Activated CD8-positive, alpha-beta T cell treated with anti-CD3 and anti-CD28 coated beads for 36 hours (primary cell): ENCODE measurements at regions of chr3 and their contacts with region 1.

Region 1: GRCh38 chr3:196073188-196073838 is 8.6 kb downstream of the TFRC start:
- DNase-seq: peak; percentile 75
- ATAC-seq: peak; percentile 91
- H3K4me3 Mint-ChIP-seq: no peak overlapping the region
- H3K27ac Mint-ChIP-seq: peak overlapping the region; percentile 68
- H3K4me1 Mint-ChIP-seq: peaks cover 29% of the 10 kb centered on the region
- H3K27me3 Mint-ChIP-seq: no peaks in the 10 kb centered on the region
- CTCF ChIP-seq: peak; percentile 63

Region 2: DNA sequence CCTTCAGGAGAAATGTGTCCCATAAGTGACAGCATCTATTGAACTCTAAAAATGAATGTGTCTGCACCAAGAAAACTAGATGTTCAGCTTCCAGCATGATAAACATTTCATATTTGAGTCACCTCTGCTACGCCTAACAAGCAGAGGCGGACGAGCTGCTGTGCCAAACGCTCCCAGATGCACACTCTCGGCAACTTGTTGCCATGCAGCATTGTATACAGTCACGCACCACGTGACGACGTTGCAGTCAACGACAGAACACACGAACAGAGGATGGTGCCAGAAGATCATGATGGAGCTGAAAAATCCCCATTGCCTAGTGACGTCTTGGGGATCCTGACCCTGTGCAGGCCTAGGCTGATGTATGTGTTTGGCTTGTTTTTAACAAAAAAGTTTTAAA is 939.9 kb before region 1 on chr3:
- CTCF ChIA-PET with region 1: no interaction called
- POLR2A ChIA-PET with region 1: no interaction called
- intact Hi-C with region 1: no loop called
- DNase-seq: peak; percentile 37
- ATAC-seq: no peak
- H3K4me3 Mint-ChIP-seq: no peak overlapping the region
- H3K27ac Mint-ChIP-seq: no peak overlapping the region
- H3K4me1 Mint-ChIP-seq: peaks cover 23% of the 10 kb centered on the region
- H3K27me3 Mint-ChIP-seq: no peaks in the 10 kb centered on the region
- CTCF ChIP-seq: no peak

Region 3: DNA sequence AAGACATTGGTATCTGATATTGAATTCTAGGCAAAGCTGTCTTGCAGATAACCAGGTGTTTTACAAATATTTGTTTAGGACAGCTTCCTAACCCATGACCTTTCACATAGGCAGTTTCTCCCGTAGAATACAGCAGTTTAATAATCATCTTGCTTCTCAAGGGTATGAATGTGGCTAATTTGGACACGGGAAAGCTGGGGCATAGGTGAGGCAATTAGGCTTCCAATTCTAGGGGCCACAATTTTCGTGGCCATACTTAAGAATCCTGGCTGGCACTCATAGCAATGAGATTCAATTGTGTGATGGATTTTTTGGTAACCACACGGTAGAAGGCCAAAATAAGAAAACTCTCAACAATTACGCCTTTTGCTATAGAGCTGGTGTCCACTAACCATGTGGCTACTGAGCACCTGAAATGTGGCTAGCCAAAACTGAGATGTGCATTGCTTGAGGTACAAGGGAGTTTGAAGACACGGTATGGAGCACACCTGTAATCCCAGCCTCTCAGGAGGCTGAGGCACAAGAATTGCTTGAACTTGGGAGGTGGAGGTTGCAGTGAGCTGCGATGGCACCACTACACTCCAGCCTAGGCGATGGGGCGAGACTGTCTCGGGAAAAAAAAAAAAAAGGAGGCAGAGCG is 25.8 kb before region 1 on chr3:
- CTCF ChIA-PET with region 1: interaction called, 31 read pairs
- POLR2A ChIA-PET with region 1: interaction called, 7 read pairs
- intact Hi-C with region 1: no loop called
- DNase-seq: no peak
- ATAC-seq: no peak
- H3K4me3 Mint-ChIP-seq: no peak overlapping the region
- H3K27ac Mint-ChIP-seq: no peak overlapping the region
- H3K4me1 Mint-ChIP-seq: peaks cover 8% of the 10 kb centered on the region
- H3K27me3 Mint-ChIP-seq: no peaks in the 10 kb centered on the region
- CTCF ChIP-seq: no peak

Region 4: DNA sequence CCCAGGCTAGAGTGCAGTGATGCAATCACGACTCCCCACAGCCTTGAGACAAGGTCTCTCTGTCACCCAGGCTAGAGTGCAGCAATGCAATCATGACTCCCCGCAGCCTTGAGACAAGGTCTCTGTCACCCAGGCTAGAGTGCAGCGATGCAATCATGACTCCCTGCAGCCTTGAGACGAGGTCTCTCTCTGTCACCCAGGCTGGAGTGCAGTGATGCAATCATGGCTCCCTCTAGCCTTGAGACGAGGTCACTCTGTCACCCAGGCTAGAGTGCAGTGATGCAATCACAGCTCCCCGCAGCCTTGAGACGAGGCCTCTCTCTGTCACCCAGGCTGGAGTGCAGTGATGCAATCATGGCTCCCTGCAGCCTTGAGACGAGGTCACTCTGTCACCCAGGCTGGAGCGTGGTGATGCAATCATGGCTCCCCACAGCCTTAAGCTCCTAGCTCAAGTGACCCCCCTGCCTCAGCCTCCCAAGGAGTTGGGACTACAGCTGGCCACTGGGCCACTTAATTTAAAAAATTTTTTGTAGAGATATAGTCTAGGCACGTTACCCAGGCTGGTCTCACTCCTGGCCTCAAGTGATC is 17.5 kb before region 1 on chr3:
- CTCF ChIA-PET with region 1: interaction called, 37 read pairs
- POLR2A ChIA-PET with region 1: interaction called, 4 read pairs
- intact Hi-C with region 1: no loop called
- DNase-seq: no peak
- ATAC-seq: peak; percentile 49
- H3K4me3 Mint-ChIP-seq: no peak overlapping the region
- H3K27ac Mint-ChIP-seq: peak overlapping the region; percentile 40
- H3K4me1 Mint-ChIP-seq: peaks cover 3% of the 10 kb centered on the region
- H3K27me3 Mint-ChIP-seq: no peaks in the 10 kb centered on the region
- CTCF ChIP-seq: no peak

Region 5: DNA sequence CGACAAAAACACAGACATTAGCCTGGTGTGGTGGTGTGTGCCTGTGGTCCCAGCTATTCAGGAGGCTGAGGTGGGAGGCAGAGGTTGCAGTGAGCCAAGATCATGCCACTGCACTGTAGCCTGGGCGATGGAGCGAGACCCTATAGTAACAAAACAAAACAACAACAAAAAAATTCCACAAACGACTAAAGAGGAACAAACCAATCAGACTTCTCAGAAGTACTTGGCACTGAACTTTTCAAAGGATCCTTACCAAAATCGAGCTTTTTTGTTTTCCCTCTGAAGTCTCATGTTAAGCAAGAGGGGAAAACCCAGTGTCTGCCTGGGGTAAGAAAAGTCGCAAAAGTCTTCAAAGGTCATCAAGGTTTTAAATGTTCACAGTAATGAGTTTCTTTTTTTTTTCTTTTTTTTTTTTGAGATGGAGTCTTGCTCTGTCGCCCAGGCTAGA is 38.6 kb after region 1 on chr3:
- CTCF ChIA-PET with region 1: interaction called, 13 read pairs
- POLR2A ChIA-PET with region 1: no interaction called
- intact Hi-C with region 1: no loop called
- DNase-seq: peak; percentile 56
- ATAC-seq: peak; percentile 89
- H3K4me3 Mint-ChIP-seq: peak overlapping the region; percentile 21
- H3K27ac Mint-ChIP-seq: peak overlapping the region; percentile 71
- H3K4me1 Mint-ChIP-seq: peaks cover 15% of the 10 kb centered on the region
- H3K27me3 Mint-ChIP-seq: no peaks in the 10 kb centered on the region
- CTCF ChIP-seq: no peak

Region 6: GRCh38 chr3:196179380-196180308 is 106.3 kb after region 1 on chr3:
- CTCF ChIA-PET with region 1: interaction called, 296 read pairs
- POLR2A ChIA-PET with region 1: interaction called, 14 read pairs
- intact Hi-C with region 1: no loop called
- DNase-seq: peak; percentile 98
- ATAC-seq: peak; percentile 85
- H3K4me3 Mint-ChIP-seq: peak overlapping the region; percentile 61
- H3K27ac Mint-ChIP-seq: peak overlapping the region; percentile 100
- H3K4me1 Mint-ChIP-seq: peaks cover 52% of the 10 kb centered on the region
- H3K27me3 Mint-ChIP-seq: no peaks in the 10 kb centered on the region
- CTCF ChIP-seq: no peak

Region 7: GRCh38 chr3:196198771-196199753 is 125.7 kb after region 1 on chr3:
- CTCF ChIA-PET with region 1: interaction called, 296 read pairs
- POLR2A ChIA-PET with region 1: interaction called, 3 read pairs
- intact Hi-C with region 1: loop called (anchors 2 kb)
- DNase-seq: no peak
- ATAC-seq: no peak
- H3K4me3 Mint-ChIP-seq: no peak overlapping the region
- H3K27ac Mint-ChIP-seq: no peak overlapping the region
- H3K4me1 Mint-ChIP-seq: peaks cover 20% of the 10 kb centered on the region
- H3K27me3 Mint-ChIP-seq: no peaks in the 10 kb centered on the region
- CTCF ChIP-seq: no peak